ENCODE measurements at regions of chr17 and their contacts with region 1.

Region 1: GRCh38 chr17:16584273-16584995 is 15.4 kb upstream of the ZNF287 start:
- DNase-seq: peak; percentile 94
- H3K4me3 Mint-ChIP-seq: peak overlapping the region; percentile 69
- H3K27ac Mint-ChIP-seq: peak overlapping the region; percentile 77
- H3K4me1 Mint-ChIP-seq: peaks cover 31% of the 10 kb centered on the region
- H3K27me3 Mint-ChIP-seq: peaks cover 71% of the 10 kb centered on the region

Region 2: GRCh38 chr17:16537130-16537458 is 47.3 kb before region 1 on chr17:
- CTCF ChIA-PET with region 1: interaction called, 19 read pairs
- DNase-seq: no peak
- H3K4me3 Mint-ChIP-seq: peak overlapping the region; percentile 90
- H3K27ac Mint-ChIP-seq: no peak overlapping the region
- H3K4me1 Mint-ChIP-seq: peaks cover 19% of the 10 kb centered on the region
- H3K27me3 Mint-ChIP-seq: peaks cover 7% of the 10 kb centered on the region

Region 3: DNA sequence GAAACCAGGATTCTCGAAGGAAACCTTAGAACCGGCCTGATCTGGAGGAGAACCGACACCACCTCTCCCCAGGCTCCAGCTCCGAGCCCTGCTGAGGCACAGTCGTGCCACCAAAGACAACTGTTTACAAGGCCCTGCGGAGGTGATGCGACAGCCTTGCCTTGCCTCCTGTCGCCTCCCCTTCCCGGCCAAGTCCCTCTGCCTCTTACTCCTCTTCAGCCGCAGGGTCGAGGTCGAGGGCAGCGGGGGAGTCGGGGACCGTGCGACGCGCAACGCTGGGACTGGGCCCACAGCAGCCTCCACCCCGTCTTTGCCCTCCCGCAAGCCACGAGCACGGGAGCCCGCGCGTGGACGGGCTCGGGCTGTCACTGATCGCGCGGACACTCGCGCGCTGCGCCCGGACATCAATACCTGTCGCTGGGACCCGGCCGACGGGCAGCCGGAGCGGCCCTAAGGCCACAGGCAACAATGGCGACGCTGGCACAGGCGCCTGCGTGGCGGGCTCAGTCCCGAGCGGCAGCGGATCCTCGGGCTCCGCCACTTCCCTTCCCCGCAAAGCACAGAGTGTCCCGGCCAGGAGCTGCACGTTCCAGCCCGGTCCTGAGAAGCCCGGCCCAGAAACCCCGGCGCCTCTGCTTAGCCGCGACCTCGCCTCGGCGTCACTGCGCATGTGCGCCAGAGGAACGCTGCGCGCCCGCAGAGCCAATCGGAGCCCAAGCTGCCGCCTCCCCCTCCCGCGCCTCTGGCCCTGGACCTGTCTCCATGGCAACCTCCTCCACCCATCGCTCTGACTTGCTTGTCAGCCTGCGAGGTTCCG is 15.7 kb before region 1 on chr17 and contains the start of gene ZNF287:
- CTCF ChIA-PET with region 1: interaction called, 11 read pairs
- DNase-seq: peak; percentile 95
- H3K4me3 Mint-ChIP-seq: peak within 1 kb of the TSS; percentile 77
- H3K27ac Mint-ChIP-seq: no peak within 1 kb of the TSS
- H3K4me1 Mint-ChIP-seq: peaks cover 21% of the 10 kb centered on the region
- H3K27me3 Mint-ChIP-seq: peaks cover 16% of the 10 kb centered on the region

Measured in activated naive CD4-positive, alpha-beta T cell treated with anti-CD3 and anti-CD28 coated beads, Interleukin-2, amount 10 ng/mL, durations not matched to agents 7 days and 5 days (primary cell).